Body of pancreas (tissue), 4 donors: ENCODE measurements at regions of chr19 and their contacts with region 1.

Region 1: DNA sequence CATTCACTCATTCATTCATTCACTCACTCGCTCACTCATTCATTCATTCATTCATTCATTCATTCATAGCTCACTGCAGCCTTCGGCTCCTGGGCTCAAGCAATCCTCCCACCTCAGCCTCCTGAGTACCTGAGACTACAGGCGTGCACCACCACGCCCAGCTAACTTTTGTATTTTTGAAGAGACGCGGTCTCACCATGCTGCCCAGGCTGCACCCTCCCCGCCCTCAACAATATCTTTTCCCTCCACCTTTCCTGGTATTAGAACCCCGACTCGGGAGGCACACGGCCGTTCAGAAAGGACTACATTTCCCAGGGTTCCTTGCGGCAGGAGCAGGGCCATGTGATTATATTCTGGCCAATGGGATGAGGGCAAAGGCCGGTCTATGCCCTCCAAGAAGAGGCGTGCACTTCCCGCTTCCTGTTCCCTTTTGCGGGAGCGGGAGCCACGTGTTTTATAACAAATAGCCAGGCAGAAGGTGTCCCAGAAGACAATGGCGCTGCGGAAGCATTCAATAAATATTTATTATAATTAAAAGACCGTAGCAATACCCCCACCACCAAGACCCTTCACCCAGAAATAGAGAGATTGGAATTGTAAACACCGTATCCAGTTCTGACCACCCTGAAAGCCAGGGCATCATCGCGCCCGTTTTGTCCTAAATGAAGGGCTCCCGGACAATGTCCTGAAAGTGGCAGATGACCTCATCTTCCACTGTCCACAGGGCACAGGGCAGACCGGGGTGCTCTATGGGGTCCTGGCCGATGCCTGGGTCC is 15.9 kb downstream of the TICAM1 start:
- DNase-seq: peak; percentile 89 to 94 (median 91)
- ATAC-seq: peak; percentile 94
- H3K4me3 ChIP-seq: no peak overlapping the region
- H3K27ac ChIP-seq: peak overlapping the region in 2 of 4 donors; percentile 14 to 50
- H3K4me1 ChIP-seq: peaks cover 9% of the 10 kb centered on the region
- H3K27me3 ChIP-seq: no peaks in the 10 kb centered on the region
- CTCF ChIP-seq: no peak
- POLR2A ChIP-seq: no peak

Region 2: GRCh38 chr19:4844348-4845179 is 28.9 kb after region 1 on chr19:
- intact Hi-C with region 1: loop called (anchors 5 kb)
- DNase-seq: peak in 3 of 4 donors; percentile 17 to 43 (median 30)
- ATAC-seq: no peak
- H3K4me3 ChIP-seq: no peak overlapping the region
- H3K27ac ChIP-seq: peak overlapping the region in 1 of 4 donors; percentile 5
- H3K4me1 ChIP-seq: peaks cover 10% of the 10 kb centered on the region
- H3K27me3 ChIP-seq: no peaks in the 10 kb centered on the region
- CTCF ChIP-seq: no peak
- POLR2A ChIP-seq: no peak

Region 3: GRCh38 chr19:4859697-4860096 is 44.1 kb after region 1 on chr19:
- intact Hi-C with region 1: loop called (anchors 5 kb)
- DNase-seq: no peak
- ATAC-seq: no peak
- H3K4me3 ChIP-seq: no peak overlapping the region
- H3K27ac ChIP-seq: no peak overlapping the region
- H3K4me1 ChIP-seq: peaks cover 14% of the 10 kb centered on the region
- H3K27me3 ChIP-seq: no peaks in the 10 kb centered on the region
- CTCF ChIP-seq: no peak
- POLR2A ChIP-seq: no peak

Region 4: GRCh38 chr19:4909897-4910593 is 94.4 kb after region 1 on chr19:
- intact Hi-C with region 1: loop called (anchors 5 kb)
- DNase-seq: peak; percentile 86 to 94 (median 90)
- ATAC-seq: peak; percentile 95
- H3K4me3 ChIP-seq: peak overlapping the region; percentile 36 to 73
- H3K27ac ChIP-seq: no peak overlapping the region
- H3K4me1 ChIP-seq: peaks cover 28% of the 10 kb centered on the region
- H3K27me3 ChIP-seq: peaks cover 0 to 4% of the 10 kb centered on the region in 2 donors
- CTCF ChIP-seq: no peak
- POLR2A ChIP-seq: no peak